HEK293 (cell line): ENCODE measurements at regions of chr10 and their contacts with region 1.

Region 1: DNA sequence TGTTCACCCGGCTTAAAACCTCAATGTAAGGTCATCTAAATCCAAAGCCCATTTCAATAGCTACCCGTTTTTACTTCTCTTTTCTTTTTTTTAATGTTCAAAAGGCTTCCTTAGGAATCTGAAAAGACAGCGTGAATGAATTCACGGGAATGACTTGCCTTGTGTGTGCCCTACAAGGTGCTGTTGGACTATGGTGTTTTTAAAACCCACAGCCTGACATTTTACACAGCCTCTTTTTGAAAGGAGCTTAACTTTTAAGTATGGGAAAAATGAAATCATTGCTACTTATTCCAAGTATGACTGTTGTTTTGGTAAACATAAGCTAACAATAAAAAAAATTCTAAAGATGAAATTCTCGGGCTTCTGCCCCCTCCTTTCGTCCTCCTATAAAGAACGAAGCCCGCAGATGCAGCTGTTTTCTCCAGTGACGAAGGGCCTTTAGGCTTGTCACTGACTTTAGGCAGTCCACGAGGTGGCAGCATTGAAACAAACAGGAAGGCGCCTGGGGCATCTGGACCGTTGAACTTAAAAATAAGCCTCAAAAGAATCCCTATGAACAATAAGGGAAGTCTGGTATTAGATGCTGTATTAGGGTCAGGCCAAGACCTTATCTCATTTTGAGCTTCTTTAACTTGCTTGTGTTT is 141.3 kb downstream of the NRP1 start:
- H3K4me3 ChIP-seq: no peak overlapping the region
- H3K27ac ChIP-seq: no peak overlapping the region
- H3K4me1 ChIP-seq: peaks cover 11% of the 10 kb centered on the region
- CTCF ChIP-seq: 0 out of 2 replicates have a peak, but pooled peaks have one; percentile 36

Region 2: GRCh38 chr10:33115738-33116719 is 77.2 kb before region 1 on chr10:
- CTCF ChIA-PET with region 1: interaction called, 14 read pairs
- POLR2A ChIA-PET with region 1: no interaction called
- H3K4me3 ChIP-seq: no peak overlapping the region
- H3K27ac ChIP-seq: no peak overlapping the region
- H3K4me1 ChIP-seq: no peaks in the 10 kb centered on the region
- CTCF ChIP-seq: no peak

Region 3: GRCh38 chr10:33204049-33204448 is 10.9 kb after region 1 on chr10:
- CTCF ChIA-PET with region 1: interaction called, 17 read pairs
- POLR2A ChIA-PET with region 1: no interaction called
- H3K4me3 ChIP-seq: no peak overlapping the region
- H3K27ac ChIP-seq: no peak overlapping the region
- H3K4me1 ChIP-seq: no peaks in the 10 kb centered on the region
- CTCF ChIP-seq: no peak

Region 4: GRCh38 chr10:33330543-33331378 is 137.6 kb after region 1 on chr10:
- CTCF ChIA-PET with region 1: interaction called, 24 read pairs
- POLR2A ChIA-PET with region 1: interaction called, 4 read pairs
- H3K4me3 ChIP-seq: no peak overlapping the region
- H3K27ac ChIP-seq: peak overlapping the region; percentile 90
- H3K4me1 ChIP-seq: peaks cover 19% of the 10 kb centered on the region
- CTCF ChIP-seq: peak; percentile 61; the same call in 1 of the 2 replicates

Region 5: DNA sequence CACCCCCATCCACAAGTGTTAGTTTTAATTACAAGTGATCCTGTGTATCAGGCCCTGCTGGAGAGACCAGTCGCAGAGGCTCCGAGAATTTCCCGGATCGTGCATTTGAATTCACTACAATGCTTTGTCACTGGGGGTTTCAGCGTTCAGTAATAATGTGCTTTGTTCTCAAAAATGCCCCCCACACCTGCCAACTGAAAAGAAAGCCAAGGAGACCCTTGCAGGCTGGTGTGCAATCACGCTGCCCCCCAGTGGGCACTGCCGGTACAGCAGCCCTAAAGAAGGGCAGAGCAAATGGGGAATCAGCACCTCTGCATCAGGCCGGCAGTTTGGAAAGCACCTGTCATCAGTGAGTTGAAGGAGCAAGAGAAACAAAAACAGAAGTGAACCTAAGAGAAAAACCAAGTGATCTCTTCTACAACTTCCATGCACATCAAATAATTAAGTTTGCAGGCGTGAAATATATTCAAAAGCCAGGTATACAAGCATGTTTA is 1444.3 kb after region 1 on chr10:
- CTCF ChIA-PET with region 1: interaction called, 15 read pairs
- POLR2A ChIA-PET with region 1: no interaction called
- H3K4me3 ChIP-seq: no peak overlapping the region
- H3K27ac ChIP-seq: no peak overlapping the region
- H3K4me1 ChIP-seq: no peaks in the 10 kb centered on the region
- CTCF ChIP-seq: peak; percentile 54